ENCODE measurements at regions of chr22 and their contacts with region 1.

Region 1: GRCh38 chr22:29907815-29908515 is 25.0 kb downstream of the MTMR3 start:
- DNase-seq: peak; percentile 98
- ATAC-seq: peak; percentile 95
- H3K4me3 ChIP-seq: peak overlapping the region; percentile 38
- H3K27ac ChIP-seq: peak overlapping the region; percentile 59
- H3K4me1 ChIP-seq: peaks cover 41% of the 10 kb centered on the region
- H3K27me3 ChIP-seq: no peaks in the 10 kb centered on the region
- CTCF ChIP-seq: no peak

Region 2: GRCh38 chr22:29766632-29767170 is 141.3 kb before region 1 on chr22 and contains the start of gene ZMAT5:
- CTCF ChIA-PET with region 1: no interaction called
- POLR2A ChIA-PET with region 1: no interaction called
- intact Hi-C with region 1: loop called (anchors 10 kb)
- DNase-seq: peak; percentile 94
- ATAC-seq: peak; percentile 96
- H3K4me3 ChIP-seq: peak within 1 kb of the TSS; percentile 100
- H3K27ac ChIP-seq: peak within 1 kb of the TSS; percentile 79
- H3K4me1 ChIP-seq: peaks cover 9% of the 10 kb centered on the region; the same call in 1 of the 2 replicates
- H3K27me3 ChIP-seq: no peaks in the 10 kb centered on the region
- CTCF ChIP-seq: no peak
- total RNA-seq, gene ZMAT5: 24.2 and 37.7 TPM in 2 replicates

Region 3: DNA sequence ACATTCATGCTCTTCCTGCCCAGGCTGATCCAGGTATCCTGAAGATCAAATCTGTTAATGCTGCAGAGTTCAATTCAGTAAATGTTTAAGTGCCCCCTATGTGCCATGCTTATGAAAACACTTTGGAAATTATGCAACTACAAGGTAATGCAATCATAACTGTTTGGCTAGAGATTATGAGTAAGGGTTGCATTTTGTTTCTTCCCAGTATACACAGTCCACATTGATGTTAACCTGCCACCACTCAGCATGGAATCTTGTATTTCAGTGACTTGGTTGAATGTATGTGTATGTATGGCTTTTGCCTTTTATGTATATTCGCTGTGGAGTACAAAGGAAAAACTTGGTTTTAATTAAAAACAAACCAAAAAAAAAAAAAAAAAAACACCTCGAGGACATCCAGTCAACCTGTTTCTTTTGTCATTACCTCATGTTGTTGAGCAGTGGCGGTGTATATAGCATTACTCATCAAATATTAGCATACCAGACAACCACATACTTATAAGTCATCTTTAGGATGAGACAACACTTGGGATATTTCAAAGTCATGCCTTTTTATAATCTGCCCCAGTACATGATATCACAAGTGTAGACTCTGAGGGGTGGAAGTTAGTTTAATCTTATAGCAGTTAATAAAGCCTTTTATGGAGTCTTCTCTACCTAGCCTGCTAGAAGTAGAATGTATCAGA is 86.2 kb after region 1 on chr22:
- CTCF ChIA-PET with region 1: no interaction called
- POLR2A ChIA-PET with region 1: no interaction called
- intact Hi-C with region 1: loop called (anchors 5 kb)
- DNase-seq: peak; percentile 72
- ATAC-seq: peak; percentile 97
- H3K4me3 ChIP-seq: no peak overlapping the region
- H3K27ac ChIP-seq: peak overlapping the region; percentile 60
- H3K4me1 ChIP-seq: peaks cover 39% of the 10 kb centered on the region
- H3K27me3 ChIP-seq: no peaks in the 10 kb centered on the region
- CTCF ChIP-seq: peak; percentile 50